ENCODE measurements at regions of chr5 and their contacts with region 1.

Region 1: GRCh38 chr5:149561848-149562247 is 10.6 kb upstream of the CSNK1A1 start:
- DNase-seq: peak; percentile 50
- H3K4me3 ChIP-seq: peak overlapping the region; percentile 19 to 42; a peak in 3 of 4 replicates
- H3K27ac ChIP-seq: peak overlapping the region; percentile 88 to 98
- H3K4me1 ChIP-seq: peaks cover 10 to 28% of the 10 kb centered on the region in 2 experiments
- H3K27me3 ChIP-seq: no peaks in the 10 kb centered on the region
- CTCF ChIP-seq: no peak
- EP300 ChIP-seq: peak; percentile 39 to 83; a peak in 3 of 4 replicates
- RAD21 ChIP-seq: no peak

Region 2: GRCh38 chr5:148882332-148882731 is 679.5 kb before region 1 on chr5:
- CTCF ChIA-PET with region 1: no interaction called
- POLR2A ChIA-PET with region 1: no interaction called
- DNase-seq: no peak
- H3K4me3 ChIP-seq: no peak overlapping the region
- H3K27ac ChIP-seq: no peak overlapping the region
- H3K4me1 ChIP-seq: no peaks in the 10 kb centered on the region
- H3K27me3 ChIP-seq: no peaks in the 10 kb centered on the region
- CTCF ChIP-seq: no peak
- EP300 ChIP-seq: no peak
- RAD21 ChIP-seq: no peak

Region 3: GRCh38 chr5:149392718-149393117 is 169.1 kb before region 1 on chr5:
- CTCF ChIA-PET with region 1: no interaction called
- POLR2A ChIA-PET with region 1: no interaction called
- DNase-seq: no peak
- H3K4me3 ChIP-seq: no peak overlapping the region
- H3K27ac ChIP-seq: no peak overlapping the region
- H3K4me1 ChIP-seq: peaks cover 0 to 3% of the 10 kb centered on the region in 2 experiments; a peak in 2 of 4 replicates
- H3K27me3 ChIP-seq: no peaks in the 10 kb centered on the region
- CTCF ChIP-seq: no peak
- EP300 ChIP-seq: no peak
- RAD21 ChIP-seq: no peak

Region 4: GRCh38 chr5:149452007-149452664 is 109.7 kb before region 1 on chr5:
- CTCF ChIA-PET with region 1: interaction called, 111 read pairs
- POLR2A ChIA-PET with region 1: no interaction called
- DNase-seq: peak; percentile 37
- H3K4me3 ChIP-seq: no peak overlapping the region
- H3K27ac ChIP-seq: peak overlapping the region; percentile 61 to 93
- H3K4me1 ChIP-seq: peaks cover 17 to 38% of the 10 kb centered on the region in 2 experiments
- H3K27me3 ChIP-seq: no peaks in the 10 kb centered on the region
- CTCF ChIP-seq: no peak
- EP300 ChIP-seq: no peak; a peak in 1 of 4 replicates
- RAD21 ChIP-seq: no peak

Region 5: GRCh38 chr5:149581192-149581861 is 19.5 kb after region 1 on chr5 and contains the start of gene ARHGEF37:
- CTCF ChIA-PET with region 1: interaction called, 16 read pairs
- POLR2A ChIA-PET with region 1: interaction called, 3 read pairs
- DNase-seq: peak; percentile 87
- H3K4me3 ChIP-seq: peak within 1 kb of the TSS; percentile 52 to 58
- H3K27ac ChIP-seq: peak within 1 kb of the TSS in 1 of 2 experiments; percentile 73; a peak in 2 of 4 replicates
- H3K4me1 ChIP-seq: peaks cover 0 to 15% of the 10 kb centered on the region in 2 experiments; a peak in 2 of 4 replicates
- H3K27me3 ChIP-seq: no peaks in the 10 kb centered on the region
- CTCF ChIP-seq: no peak
- EP300 ChIP-seq: no peak
- RAD21 ChIP-seq: no peak
- polyA plus RNA-seq, gene ARHGEF37: 0.94 and 1.3 TPM in 2 replicates